H1 (cell line): ENCODE measurements at regions of chr17 and their contacts with region 1.

Region 1: DNA sequence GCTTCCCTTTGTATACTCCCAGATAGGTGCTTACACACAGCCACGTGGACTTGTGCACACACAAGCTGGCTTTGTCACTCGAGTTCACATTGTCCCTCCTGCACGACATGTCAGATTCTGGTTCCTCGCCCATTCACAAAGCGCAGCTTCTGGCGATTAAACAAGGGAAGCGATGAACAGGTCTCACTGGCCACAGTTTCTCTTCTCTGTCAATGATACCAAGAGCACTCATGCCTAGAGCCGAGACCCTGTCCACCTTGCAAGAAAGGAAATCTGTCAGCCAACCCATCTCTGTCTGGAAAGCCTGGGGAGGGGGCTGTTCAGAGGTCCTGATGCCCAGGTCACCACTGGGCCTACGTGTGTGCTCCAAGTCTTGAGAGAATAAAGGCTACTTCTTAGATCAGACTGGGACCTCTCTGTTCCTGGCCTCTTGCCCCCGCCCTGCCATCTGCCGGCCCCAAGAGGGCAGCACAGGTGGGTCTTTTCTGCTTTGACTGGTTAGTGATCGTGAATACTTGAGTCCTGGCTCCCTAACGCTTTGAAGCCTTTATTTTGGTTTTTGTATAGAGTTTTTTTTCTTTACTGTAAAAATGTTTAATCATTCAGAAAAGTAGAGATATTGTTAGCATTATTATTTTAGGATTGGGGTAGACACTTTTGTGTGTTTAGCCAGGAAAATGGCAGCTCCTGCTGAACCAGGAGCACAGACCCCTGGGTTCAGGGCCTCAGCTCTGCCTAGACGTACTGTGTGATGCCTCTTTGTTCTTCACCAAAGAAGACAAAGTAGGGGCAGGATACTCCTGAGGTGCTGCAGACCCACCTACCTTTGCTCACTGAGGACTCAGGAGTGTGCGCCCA is 104.7 kb downstream of the MRM1 start:
- DNase-seq: no peak
- H3K4me3 ChIP-seq: no peak overlapping the region
- H3K27ac ChIP-seq: no peak overlapping the region
- H3K4me1 ChIP-seq: peaks cover 0 to 8% (median 2%) of the 10 kb centered on the region in 4 experiments; a peak in 2 of 7 replicates
- H3K27me3 ChIP-seq: peaks cover 0 to 15% (median 7%) of the 10 kb centered on the region in 4 experiments; a peak in 6 of 7 replicates
- CTCF ChIP-seq: peak; percentile 81 to 88 (median 82)
- EP300 ChIP-seq: no peak
- POLR2A ChIP-seq: no peak
- RAD21 ChIP-seq: peak; percentile 81 to 88

Region 2: GRCh38 chr17:36657763-36658490 is 48.2 kb before region 1 on chr17:
- CTCF ChIA-PET with region 1: interaction called, 42 read pairs
- POLR2A ChIA-PET with region 1: no interaction called
- DNase-seq: peak in 1 of 2 experiments; percentile 86
- H3K4me3 ChIP-seq: peak overlapping the region; percentile 44 to 81 (median 66)
- H3K27ac ChIP-seq: no peak overlapping the region
- H3K4me1 ChIP-seq: peaks cover 0 to 4% (median 3%) of the 10 kb centered on the region in 4 experiments; a peak in 3 of 7 replicates
- H3K27me3 ChIP-seq: peaks cover 0 to 10% (median 3%) of the 10 kb centered on the region in 4 experiments; a peak in 3 of 7 replicates
- CTCF ChIP-seq: peak; percentile 69 to 76 (median 74)
- EP300 ChIP-seq: 0 out of 3 replicates have a peak, but pooled peaks of 1 of the 2 experiments have one; percentile 17
- POLR2A ChIP-seq: no peak
- RAD21 ChIP-seq: peak; percentile 69 to 78

Region 3: DNA sequence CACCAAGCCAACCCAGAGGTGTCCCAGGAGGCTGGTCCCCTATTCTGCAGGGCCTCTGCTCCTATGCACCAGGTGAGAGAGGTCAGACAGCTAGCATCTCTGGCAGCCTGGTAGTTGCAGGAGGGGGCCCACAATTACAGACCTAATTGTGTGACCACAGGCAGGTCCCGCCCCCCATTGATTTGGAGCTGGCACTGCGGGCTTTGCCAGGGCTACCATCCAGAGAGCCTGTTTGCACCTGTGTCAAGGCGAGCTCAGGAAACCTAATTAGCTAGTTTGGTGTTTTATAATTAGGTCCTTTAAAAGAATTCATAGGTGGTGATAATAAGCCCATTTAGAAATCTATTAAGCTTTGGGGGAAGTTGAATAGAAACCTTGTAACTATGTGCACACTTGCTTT is 14.5 kb before region 1 on chr17:
- CTCF ChIA-PET with region 1: interaction called, 10 read pairs
- POLR2A ChIA-PET with region 1: no interaction called
- DNase-seq: no peak
- H3K4me3 ChIP-seq: no peak overlapping the region
- H3K27ac ChIP-seq: no peak overlapping the region
- H3K4me1 ChIP-seq: peaks cover 4 to 20% (median 12%) of the 10 kb centered on the region in 4 experiments
- H3K27me3 ChIP-seq: no peaks in the 10 kb centered on the region
- CTCF ChIP-seq: no peak
- EP300 ChIP-seq: no peak
- POLR2A ChIP-seq: no peak
- RAD21 ChIP-seq: no peak

Region 4: DNA sequence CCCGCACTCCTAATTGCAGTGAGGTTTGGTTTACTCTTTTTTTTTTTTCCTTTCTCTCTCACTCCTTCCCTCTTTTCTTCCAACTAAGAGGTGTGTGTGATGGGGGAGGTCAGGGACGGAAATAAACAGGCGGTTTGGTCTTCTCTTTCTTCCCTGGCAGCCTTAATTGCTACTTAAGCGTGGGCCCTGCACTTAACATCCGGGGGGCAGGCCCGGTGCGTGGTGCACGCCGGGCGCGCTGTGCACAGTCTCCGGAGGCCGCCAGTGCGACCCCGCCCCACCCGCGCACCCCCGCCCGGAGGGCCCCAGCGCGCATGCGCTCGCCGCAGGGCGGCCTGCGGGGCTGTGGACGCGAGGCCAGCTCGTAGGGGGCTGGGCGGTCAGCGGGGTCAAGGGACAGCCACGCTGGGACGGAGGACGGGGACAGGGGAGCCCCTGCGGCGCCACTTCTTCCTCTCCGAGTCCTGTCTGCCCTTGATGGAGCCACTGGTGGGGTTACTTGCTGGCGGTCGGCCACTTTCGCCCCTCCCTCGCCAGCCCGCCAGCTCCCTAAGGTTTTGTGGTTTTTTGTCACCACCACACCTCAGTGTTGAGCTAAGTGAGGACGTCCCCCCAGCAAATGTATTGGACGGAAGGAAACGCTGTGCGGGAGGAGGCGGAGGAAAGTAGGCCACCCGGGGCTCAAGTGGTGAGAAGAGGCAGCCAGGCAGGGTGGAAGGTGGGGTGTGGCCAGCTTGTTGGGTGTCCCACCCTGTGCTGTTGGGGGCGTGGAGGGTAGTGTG is 16.2 kb after region 1 on chr17:
- CTCF ChIA-PET with region 1: interaction called, 25 read pairs
- POLR2A ChIA-PET with region 1: no interaction called
- DNase-seq: peak in 1 of 2 experiments; percentile 83
- H3K4me3 ChIP-seq: peak overlapping the region; percentile 28 to 58 (median 34); a peak in 7 of 8 replicates
- H3K27ac ChIP-seq: no peak overlapping the region
- H3K4me1 ChIP-seq: peaks cover 9 to 11% (median 10%) of the 10 kb centered on the region in 4 experiments; a peak in 6 of 7 replicates
- H3K27me3 ChIP-seq: no peaks in the 10 kb centered on the region; a peak in 3 of 7 replicates
- CTCF ChIP-seq: no peak
- EP300 ChIP-seq: no peak
- POLR2A ChIP-seq: no peak
- RAD21 ChIP-seq: no peak

Region 5: GRCh38 chr17:36791150-36791941 is 85.2 kb after region 1 on chr17:
- CTCF ChIA-PET with region 1: interaction called, 17 read pairs
- POLR2A ChIA-PET with region 1: no interaction called
- DNase-seq: no peak
- H3K4me3 ChIP-seq: peak overlapping the region in 1 of 4 experiments; percentile 20; a peak in 2 of 8 replicates
- H3K27ac ChIP-seq: peak overlapping the region; percentile 30; the same call in 1 of the 2 replicates
- H3K4me1 ChIP-seq: peaks cover 6 to 14% (median 10%) of the 10 kb centered on the region in 4 experiments
- H3K27me3 ChIP-seq: no peaks in the 10 kb centered on the region; a peak in 1 of 7 replicates
- CTCF ChIP-seq: no peak
- EP300 ChIP-seq: peak in 1 of 2 experiments; percentile 33; a peak in 1 of 3 replicates
- POLR2A ChIP-seq: no peak; a peak in 1 of 3 replicates
- RAD21 ChIP-seq: no peak

Region 6: DNA sequence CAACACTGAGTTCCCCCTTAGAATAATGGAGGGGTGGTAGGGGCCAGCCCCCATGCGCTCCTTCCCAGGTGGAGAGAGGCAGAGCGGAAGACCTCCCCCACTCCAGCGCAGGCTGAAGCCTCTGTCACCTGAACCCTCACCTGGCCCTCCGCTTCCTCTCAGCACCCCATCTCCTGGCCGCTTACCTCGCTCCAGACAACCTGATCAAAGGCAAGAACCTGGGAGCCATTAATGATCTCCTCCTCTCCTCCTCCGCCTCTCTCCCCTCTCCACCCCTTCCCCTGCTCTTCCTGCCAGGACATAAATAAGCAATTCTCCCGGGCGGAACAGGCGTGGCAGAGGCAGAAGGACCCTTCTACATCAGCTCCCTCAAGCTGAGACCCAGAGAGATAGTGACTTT is 121.0 kb after region 1 on chr17:
- CTCF ChIA-PET with region 1: no interaction called
- POLR2A ChIA-PET with region 1: no interaction called
- DNase-seq: no peak
- H3K4me3 ChIP-seq: no peak overlapping the region
- H3K27ac ChIP-seq: no peak overlapping the region
- H3K4me1 ChIP-seq: peaks cover 0 to 20% (median 14%) of the 10 kb centered on the region in 4 experiments; a peak in 6 of 7 replicates
- H3K27me3 ChIP-seq: peaks cover 0 to 2% (median 0%) of the 10 kb centered on the region in 4 experiments; a peak in 1 of 7 replicates
- CTCF ChIP-seq: no peak
- EP300 ChIP-seq: no peak
- POLR2A ChIP-seq: no peak
- RAD21 ChIP-seq: no peak